ENCODE measurements at regions of chr9 and their contacts with region 1.

Region 1: DNA sequence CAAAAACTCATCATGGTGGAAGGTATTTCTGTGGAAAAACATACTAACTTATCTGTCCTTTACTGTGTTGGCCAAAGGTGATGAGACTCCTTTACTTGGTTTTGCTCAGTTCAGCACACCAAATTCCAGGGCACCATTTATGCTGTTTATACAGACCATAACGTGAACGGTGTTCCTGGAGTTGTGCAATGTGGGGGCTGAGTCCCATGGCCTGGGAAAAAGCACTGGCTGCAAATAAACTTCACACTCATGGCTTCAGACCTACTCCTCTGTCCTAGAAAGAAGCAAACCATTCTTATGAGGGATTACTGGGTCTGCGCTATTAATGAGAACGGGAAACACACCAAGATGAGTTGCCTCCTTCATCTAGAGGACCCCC is 10.4 kb downstream of the FREM1 start:
- DNase-seq: no peak

Region 2: DNA sequence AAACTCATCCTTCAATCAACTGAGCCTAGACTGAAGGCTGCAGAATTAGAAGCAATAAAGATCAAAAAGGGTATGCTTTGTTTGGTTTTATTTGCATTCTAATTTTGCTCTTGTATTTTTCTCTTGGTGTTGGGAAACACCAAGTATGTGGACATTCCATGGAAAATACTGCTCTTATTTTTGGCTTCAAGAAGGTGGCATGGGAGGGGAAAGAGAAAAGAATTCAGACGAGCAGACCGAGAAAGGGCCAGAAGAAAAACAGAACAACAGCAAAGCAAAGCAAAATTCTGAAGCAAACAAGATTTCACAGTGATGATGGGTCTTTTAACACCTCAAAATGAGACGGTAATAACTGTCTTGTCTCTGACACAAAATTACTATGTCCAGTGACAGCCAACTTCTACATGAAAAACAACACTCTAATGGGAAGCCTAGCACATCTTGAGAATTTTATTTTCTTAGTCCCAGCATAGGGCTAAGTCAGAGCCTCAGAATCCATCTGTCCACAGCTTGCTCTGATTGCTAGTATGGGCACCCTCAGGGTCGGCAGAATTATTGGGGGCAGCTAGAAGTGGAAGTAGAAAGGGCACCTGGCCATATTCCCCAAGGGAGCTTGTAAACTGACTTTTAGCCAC is 16.4 kb before region 1 on chr9:
- intact Hi-C with region 1: loop called in 1 of 2 experiments (anchors 2 kb)
- DNase-seq: no peak